Heart right ventricle (tissue), 16 donors: ENCODE measurements at regions of chr14 and their contacts with region 1.

Region 1: GRCh38 chr14:20613094-20614037 is 22.2 kb upstream of the RNASE12 start:
- DNase-seq: peak; percentile 68 to 81
- ATAC-seq: peak; percentile 66 to 91 (median 86)
- H3K4me3 ChIP-seq: peak overlapping the region; percentile 9 to 68 (median 58)
- H3K27ac ChIP-seq: peak overlapping the region in 9 of 10 donors; percentile 20 to 82 (median 54)
- H3K4me1 ChIP-seq: peaks cover 3 to 52% (median 22%) of the 10 kb centered on the region in 9 donors
- H3K27me3 ChIP-seq: peaks cover 0 to 5% (median 0%) of the 10 kb centered on the region in 7 donors
- CTCF ChIP-seq: peak; percentile 52 to 80 (median 70)

Region 2: DNA sequence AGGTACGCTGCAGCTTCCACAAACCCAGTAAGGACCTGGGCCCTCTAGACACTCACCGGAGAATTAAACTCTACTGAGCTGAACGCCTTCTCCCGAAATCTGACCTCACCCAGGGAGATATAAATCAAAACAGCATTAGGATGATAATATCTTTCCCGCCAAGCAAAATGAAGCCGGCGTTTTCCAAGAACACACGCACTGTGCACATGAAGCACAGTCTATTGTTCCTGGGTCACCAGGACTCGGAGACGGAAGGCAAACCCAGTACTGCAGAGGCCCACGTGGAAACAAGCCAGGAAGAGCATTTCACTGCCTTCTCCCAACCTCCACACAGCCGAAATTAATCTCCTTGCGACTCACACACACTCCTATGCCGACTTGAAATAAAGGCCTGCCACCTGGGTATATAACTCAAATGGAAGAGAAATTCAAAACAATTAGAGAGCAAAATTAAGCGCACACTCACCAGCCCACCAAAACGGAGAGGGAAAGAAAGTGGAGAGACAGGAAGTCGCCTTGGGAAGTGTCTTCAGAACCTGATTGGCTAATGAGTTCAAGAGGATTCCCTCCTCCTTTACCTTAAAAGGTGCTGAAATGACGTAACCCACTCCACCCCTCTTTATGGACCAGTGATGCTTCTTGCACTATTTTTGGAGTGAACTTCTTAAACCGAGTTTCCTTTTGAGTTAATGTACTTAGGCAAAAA is 280.4 kb before region 1 on chr14 and contains the start of gene CCNB1IP1:
- intact Hi-C with region 1: loop called in 7 of 10 experiments (anchors 2 to 10 kb)
- DNase-seq: peak; percentile 29 to 83
- ATAC-seq: peak; percentile 96 to 100 (median 99)
- H3K4me3 ChIP-seq: peak within 1 kb of the TSS; percentile 29 to 75 (median 68)
- H3K27ac ChIP-seq: peak within 1 kb of the TSS; percentile 49 to 89 (median 84)
- H3K4me1 ChIP-seq: peaks cover 0 to 28% (median 23%) of the 10 kb centered on the region in 9 donors
- H3K27me3 ChIP-seq: no peaks in the 10 kb centered on the region
- CTCF ChIP-seq: no peak
- total RNA-seq, gene CCNB1IP1: 35.7 to 69.9 (median 56.0) TPM

Region 3: GRCh38 chr14:20413045-20413799 is 200.1 kb before region 1 on chr14 and contains the start of gene TEP1:
- intact Hi-C with region 1: loop called (anchors 1 to 10 kb)
- DNase-seq: peak; percentile 89
- ATAC-seq: peak; percentile 94 to 98 (median 98)
- H3K4me3 ChIP-seq: peak within 1 kb of the TSS; percentile 63 to 92 (median 75)
- H3K27ac ChIP-seq: peak within 1 kb of the TSS; percentile 40 to 98 (median 95)
- H3K4me1 ChIP-seq: peaks cover 0 to 35% (median 13%) of the 10 kb centered on the region in 9 donors
- H3K27me3 ChIP-seq: no peaks in the 10 kb centered on the region
- CTCF ChIP-seq: no peak
- total RNA-seq, gene TEP1: 6.9 to 17.8 (median 8.6) TPM

Region 4: GRCh38 chr14:20461274-20462001 is 151.9 kb before region 1 on chr14 and contains the start of gene PIP4P1:
- intact Hi-C with region 1: loop called in 4 of 10 experiments (anchors 5 kb)
- DNase-seq: peak; percentile 97 to 99
- ATAC-seq: peak; percentile 96 to 99 (median 98)
- H3K4me3 ChIP-seq: peak within 1 kb of the TSS; percentile 81 to 100 (median 94)
- H3K27ac ChIP-seq: peak within 1 kb of the TSS; percentile 77 to 96 (median 93)
- H3K4me1 ChIP-seq: peaks cover 9 to 49% (median 24%) of the 10 kb centered on the region in 9 donors
- H3K27me3 ChIP-seq: no peaks in the 10 kb centered on the region
- CTCF ChIP-seq: no peak
- total RNA-seq, gene PIP4P1: 15.5 to 25.3 (median 18.7) TPM

Region 5: DNA sequence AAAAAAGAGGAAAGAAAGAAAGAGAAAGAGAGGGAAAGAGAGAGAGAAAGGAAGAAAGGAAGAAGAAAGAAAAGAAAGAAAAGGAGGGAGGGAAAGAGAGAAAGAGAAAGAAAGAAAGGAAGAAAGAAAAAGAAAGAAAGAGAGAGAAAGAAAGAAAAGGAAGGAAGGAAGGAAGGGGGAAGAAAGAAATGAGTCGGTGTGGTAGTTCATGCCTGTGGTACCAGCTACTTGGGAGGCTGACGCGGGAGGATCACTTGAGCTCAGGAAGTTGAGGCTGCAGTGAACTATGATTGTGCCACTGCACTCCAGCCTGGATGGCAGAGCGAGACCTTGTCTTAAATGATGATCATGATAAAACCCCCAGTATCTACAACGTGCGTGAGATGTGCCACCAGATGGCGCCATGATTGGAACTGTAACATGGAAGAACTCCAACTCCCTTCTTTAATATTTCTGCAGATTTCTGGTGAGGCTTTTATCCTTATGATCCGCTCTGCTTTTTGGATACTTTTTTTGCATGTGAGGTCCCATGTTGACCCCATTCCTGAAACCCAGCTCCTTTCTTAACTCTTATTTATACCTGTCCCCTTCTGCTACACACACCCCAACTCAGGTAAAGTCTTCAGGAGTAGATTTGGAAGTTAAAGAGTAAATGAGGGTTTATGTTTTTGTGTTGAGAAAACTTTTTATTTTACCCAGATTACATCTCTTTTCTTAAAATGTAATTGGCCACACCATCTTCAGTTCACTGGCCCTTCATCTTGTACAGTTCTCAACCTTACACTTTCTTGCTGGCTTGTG is 82.4 kb before region 1 on chr14:
- intact Hi-C with region 1: loop called in 6 of 10 experiments (anchors 5 to 10 kb)
- DNase-seq: peak; percentile 58 to 60
- ATAC-seq: no peak
- H3K4me3 ChIP-seq: no peak overlapping the region
- H3K27ac ChIP-seq: no peak overlapping the region
- H3K4me1 ChIP-seq: peaks cover 0 to 5% (median 0%) of the 10 kb centered on the region in 9 donors
- H3K27me3 ChIP-seq: peaks cover 0 to 5% (median 0%) of the 10 kb centered on the region in 7 donors
- CTCF ChIP-seq: peak; percentile 30 to 74 (median 65)

Region 6: DNA sequence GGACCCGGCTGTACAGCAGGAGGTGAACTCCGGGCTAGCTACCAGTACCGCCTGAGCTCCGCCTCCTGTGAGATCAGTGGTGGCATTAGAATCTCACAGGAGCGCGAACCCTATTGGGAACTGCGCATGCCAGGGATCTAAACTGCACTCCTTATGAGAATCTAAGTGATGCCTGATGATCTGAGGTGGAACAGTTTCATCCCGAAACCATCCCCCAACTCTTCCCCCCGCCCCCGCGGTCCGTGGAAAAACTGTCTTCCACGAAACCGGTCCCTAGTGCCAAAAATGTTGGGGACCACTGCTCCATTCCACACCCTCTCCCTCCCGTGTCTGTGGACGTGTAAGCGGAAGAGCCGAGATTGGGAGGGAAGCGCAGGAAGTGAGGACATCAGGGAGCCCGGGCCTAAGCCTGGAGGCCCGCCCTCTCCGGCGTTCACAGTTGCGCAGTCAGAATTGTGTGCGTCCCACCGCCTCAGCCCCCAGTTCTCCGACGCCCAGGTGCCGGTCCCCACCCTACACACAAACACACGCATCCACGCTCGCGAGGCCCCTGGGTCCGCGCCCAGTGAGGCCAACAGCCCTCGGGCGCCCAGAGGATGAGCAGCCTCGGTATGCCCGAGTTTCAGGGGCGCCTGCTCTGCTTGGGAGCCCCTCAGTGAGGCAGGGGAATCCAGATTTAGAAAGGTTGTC is 69.2 kb after region 1 on chr14:
- intact Hi-C with region 1: loop called (anchors 1 to 5 kb)
- DNase-seq: peak; percentile 88 to 93
- ATAC-seq: peak; percentile 89 to 95 (median 92)
- H3K4me3 ChIP-seq: peak overlapping the region; percentile 67 to 99 (median 89)
- H3K27ac ChIP-seq: peak overlapping the region; percentile 98 to 100 (median 100)
- H3K4me1 ChIP-seq: peaks cover 0 to 63% (median 16%) of the 10 kb centered on the region in 9 donors
- H3K27me3 ChIP-seq: no peaks in the 10 kb centered on the region
- CTCF ChIP-seq: peak in 4 of 9 donors; percentile 1 to 45 (median 21)